Activated T-helper 1 cell treated with anti-CD3 and anti-CD28 coated beads, Interleukin-12 subunit alpha, Interleukin-12 subunit beta, Interleukin-2, Interleukin-4 antibody, amounts not matched to agents 30 ng/mL and 10 ng/mL and 1 ng/mL, durations not matched to agents 14 hours and 24 hours and 36 hours (primary cell): ENCODE measurements at regions of chr1 and their contacts with region 1.

Region 1: DNA sequence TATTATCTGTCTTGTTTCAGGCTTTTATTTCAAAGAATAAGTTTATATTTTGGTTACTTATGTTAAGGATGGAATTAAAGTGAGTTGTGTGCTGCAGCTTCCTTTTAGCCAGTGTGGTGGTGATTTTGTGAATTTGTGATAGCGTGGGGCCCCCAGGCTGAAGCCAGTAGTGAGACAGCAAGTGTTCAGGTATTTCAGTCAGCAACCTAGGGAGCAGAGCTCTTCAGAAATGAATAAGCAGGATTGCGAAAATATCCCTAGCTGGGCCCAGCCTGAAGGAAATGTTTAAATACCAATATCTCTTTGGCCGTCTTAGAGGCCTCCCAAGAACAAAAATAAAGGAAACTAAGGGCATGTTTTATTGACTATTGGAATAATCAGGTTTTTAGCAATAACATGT is 150.8 kb upstream of the C1orf105 start:
- DNase-seq: no peak
- H3K4me3 Mint-ChIP-seq: peak overlapping the region; percentile 43
- H3K27ac Mint-ChIP-seq: peak overlapping the region; percentile 82
- H3K4me1 Mint-ChIP-seq: peaks cover 64% of the 10 kb centered on the region
- H3K27me3 Mint-ChIP-seq: no peaks in the 10 kb centered on the region

Region 2: DNA sequence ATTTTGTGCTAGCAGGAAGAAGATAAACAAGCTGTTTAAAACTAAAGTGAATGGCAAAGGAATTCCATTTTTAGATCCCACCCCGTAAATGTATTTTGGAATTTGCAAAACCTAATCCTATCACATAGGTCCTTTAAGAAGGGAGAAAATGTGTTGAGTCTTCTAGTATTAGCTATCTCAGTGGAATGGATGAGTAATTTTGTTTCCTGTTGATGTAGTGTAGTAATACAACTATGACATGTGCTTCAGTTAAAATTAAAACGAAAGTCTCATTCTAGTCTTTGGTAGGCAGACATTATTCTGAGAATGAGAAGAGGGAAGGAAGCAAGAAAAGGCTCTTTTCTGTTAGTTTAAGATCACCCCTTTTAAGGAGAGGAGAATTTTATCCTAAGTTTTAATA is 115.1 kb before region 1 on chr1:
- intact Hi-C with region 1: loop called (anchors 2 kb)
- DNase-seq: no peak
- H3K4me3 Mint-ChIP-seq: peak overlapping the region; percentile 23
- H3K27ac Mint-ChIP-seq: peak overlapping the region; percentile 87
- H3K4me1 Mint-ChIP-seq: peaks cover 7% of the 10 kb centered on the region
- H3K27me3 Mint-ChIP-seq: peaks cover 3% of the 10 kb centered on the region

Region 3: DNA sequence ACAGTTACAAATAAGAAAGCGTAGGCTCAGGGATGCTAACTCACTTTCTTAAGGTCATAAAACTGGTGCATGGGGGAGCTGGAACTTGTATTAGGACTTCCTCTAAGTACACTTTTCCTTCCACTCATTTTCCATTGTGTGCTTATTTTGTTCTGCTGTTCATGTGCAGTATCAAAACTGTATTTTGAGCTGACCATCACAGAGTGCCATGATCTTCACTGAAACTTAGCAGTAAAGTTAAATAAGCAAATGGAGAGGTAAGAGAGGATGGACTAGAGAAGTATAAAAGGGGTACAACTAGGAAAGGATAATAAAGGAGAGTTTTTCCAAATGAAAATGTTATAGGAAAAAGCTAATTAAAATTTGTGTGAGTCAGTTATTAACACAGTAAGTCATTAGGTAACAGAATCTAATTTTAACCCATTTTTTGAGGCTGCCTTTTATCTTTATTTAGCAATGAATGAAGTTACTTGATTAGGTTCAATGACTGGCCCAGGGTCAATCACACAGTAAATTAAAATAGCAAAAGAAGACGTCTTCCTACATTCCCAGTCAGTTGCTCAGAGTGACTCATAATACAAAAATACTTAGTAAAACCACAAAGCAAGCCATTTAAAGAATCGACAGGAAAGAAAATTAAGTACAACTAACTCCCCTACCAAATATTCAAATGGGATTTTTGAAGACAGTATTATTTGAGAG is 15.0 kb before region 1 on chr1:
- intact Hi-C with region 1: loop called (anchors 1 kb)
- DNase-seq: no peak
- H3K4me3 Mint-ChIP-seq: peak overlapping the region; percentile 15
- H3K27ac Mint-ChIP-seq: peak overlapping the region; percentile 86
- H3K4me1 Mint-ChIP-seq: peaks cover 28% of the 10 kb centered on the region
- H3K27me3 Mint-ChIP-seq: peaks cover 3% of the 10 kb centered on the region

Region 4: DNA sequence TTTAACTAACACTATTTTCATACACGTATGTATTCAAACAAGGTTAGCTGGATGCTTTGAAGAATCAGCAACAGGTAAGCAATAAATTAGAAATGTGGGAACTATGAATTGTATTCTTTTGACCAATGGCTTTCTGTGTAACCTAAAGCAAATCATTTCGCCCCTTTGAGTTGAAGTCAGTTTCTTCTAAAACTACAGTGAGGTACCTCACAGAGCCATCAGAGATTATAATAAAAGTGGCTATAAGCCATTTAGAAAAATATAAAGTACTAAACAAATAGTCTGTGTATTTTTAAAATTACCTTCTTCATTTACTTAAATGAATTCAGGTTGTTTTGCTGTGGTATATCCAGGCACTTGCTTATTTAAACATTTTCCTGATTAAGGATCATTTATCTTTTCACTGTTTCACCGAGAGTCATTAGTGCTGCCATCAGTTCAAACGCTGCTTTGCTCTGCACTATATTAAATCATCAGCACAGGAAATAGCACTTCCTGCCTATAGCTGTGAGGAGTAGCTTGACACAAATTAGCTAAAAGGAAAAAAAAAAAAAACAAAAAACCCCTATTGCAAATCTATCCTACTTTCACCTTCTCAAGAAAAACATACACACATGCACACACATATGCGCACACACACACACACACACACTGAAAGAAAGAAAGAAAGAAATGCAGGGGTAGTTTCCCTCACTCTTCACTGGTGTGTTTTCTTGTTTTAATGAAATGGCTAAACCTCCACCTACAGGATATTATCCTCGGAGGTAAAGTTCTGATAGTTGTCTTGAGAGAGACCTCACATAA is 111.0 kb after region 1 on chr1:
- intact Hi-C with region 1: loop called (anchors 1 kb)
- DNase-seq: no peak
- H3K4me3 Mint-ChIP-seq: peak overlapping the region; percentile 69
- H3K27ac Mint-ChIP-seq: peak overlapping the region; percentile 59
- H3K4me1 Mint-ChIP-seq: peaks cover 39% of the 10 kb centered on the region
- H3K27me3 Mint-ChIP-seq: peaks cover 4% of the 10 kb centered on the region

Region 5: GRCh38 chr1:172449585-172450534 is 180.2 kb after region 1 on chr1:
- intact Hi-C with region 1: loop called (anchors 2 kb)
- DNase-seq: peak; percentile 30
- H3K4me3 Mint-ChIP-seq: peak overlapping the region; percentile 43
- H3K27ac Mint-ChIP-seq: no peak overlapping the region
- H3K4me1 Mint-ChIP-seq: peaks cover 40% of the 10 kb centered on the region
- H3K27me3 Mint-ChIP-seq: peaks cover 2% of the 10 kb centered on the region